ENCODE measurements at regions of chr20 and their contacts with region 1.

Region 1: GRCh38 chr20:50929299-50930138 is 1.7 kb downstream of the ADNP start:
- DNase-seq: peak; percentile 93 to 94
- ATAC-seq: peak; percentile 81
- H3K4me3 ChIP-seq: peak overlapping the region; percentile 74 to 95
- H3K27ac ChIP-seq: peak overlapping the region in 1 of 2 donors; percentile 20
- H3K4me1 ChIP-seq: peaks cover 0 to 3% of the 10 kb centered on the region in 2 donors
- H3K27me3 ChIP-seq: no peaks in the 10 kb centered on the region

Region 2: DNA sequence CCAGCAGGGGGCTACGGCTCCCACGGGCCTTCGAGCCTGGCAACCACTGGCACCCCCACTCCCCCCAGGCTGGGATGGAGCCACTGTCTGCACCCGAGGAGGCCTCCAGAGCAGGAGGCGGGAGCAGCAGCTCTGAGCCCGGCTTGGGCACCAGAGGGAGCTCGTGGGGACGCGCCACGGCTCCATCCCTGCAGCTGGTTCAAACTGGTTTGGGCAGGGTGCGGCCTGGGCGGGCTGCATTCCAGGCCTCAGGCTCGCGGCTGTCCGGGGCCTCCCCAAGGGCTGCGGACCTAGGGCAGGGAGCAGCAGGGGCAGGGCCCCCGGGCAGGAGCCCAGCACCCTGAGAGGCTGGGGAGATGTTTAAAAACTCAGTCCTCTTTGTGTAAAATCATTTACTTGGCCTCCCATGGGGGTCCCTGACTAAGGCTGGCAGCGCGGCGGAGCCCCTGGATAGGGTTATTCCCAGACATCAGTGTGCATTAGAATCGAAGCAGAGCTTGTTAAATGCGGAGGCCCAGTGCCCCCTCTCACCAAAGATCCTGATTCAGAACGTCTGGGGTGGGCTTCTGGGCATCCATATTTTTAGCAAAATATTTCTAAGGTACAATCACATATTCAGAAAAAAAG is 138.8 kb before region 1 on chr20:
- intact Hi-C with region 1: loop called (anchors 1 to 5 kb)
- DNase-seq: peak; percentile 95
- ATAC-seq: peak; percentile 92
- H3K4me3 ChIP-seq: no peak overlapping the region
- H3K27ac ChIP-seq: peak overlapping the region; percentile 34 to 62
- H3K4me1 ChIP-seq: no peaks in the 10 kb centered on the region
- H3K27me3 ChIP-seq: no peaks in the 10 kb centered on the region

Region 3: GRCh38 chr20:50819349-50819748 is 110.2 kb before region 1 on chr20:
- intact Hi-C with region 1: loop called (anchors 1 to 2 kb)
- DNase-seq: no peak
- ATAC-seq: no peak
- H3K4me3 ChIP-seq: no peak overlapping the region
- H3K27ac ChIP-seq: no peak overlapping the region
- H3K4me1 ChIP-seq: no peaks in the 10 kb centered on the region
- H3K27me3 ChIP-seq: no peaks in the 10 kb centered on the region

Region 4: GRCh38 chr20:50958615-50959542 is 29.4 kb after region 1 on chr20 and contains the start of gene MOCS3:
- intact Hi-C with region 1: loop called in 1 of 2 experiments (anchors 1 kb)
- DNase-seq: peak; percentile 88 to 90
- ATAC-seq: peak; percentile 92
- H3K4me3 ChIP-seq: peak within 1 kb of the TSS; percentile 86 to 88
- H3K27ac ChIP-seq: peak within 1 kb of the TSS; percentile 43 to 87
- H3K4me1 ChIP-seq: no peaks in the 10 kb centered on the region
- H3K27me3 ChIP-seq: no peaks in the 10 kb centered on the region
- total RNA-seq, gene MOCS3: 2.7 to 3.2 TPM

Region 5: DNA sequence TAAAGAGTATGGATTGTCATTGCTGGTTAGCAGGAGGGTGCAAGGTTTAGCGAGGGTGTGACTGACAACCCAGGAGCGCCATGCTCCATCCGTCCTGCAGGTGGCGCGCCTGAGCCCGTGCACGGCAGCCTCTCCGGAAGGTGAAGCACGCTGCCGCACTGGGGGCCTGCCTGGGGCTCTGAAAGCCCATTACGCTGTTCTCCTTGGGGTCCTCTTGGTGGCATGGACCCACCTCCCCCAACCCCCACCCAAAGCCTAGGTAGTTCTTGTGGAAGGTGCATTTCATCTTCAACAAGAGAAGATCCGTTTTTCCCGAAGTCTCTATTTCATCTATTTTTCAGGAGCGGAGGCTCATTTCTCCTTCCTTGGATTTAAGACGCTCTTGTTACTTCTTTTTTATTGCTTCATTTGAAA is 290.8 kb after region 1 on chr20:
- intact Hi-C with region 1: no loop called
- DNase-seq: peak in 1 of 2 donors; percentile 78
- ATAC-seq: no peak
- H3K4me3 ChIP-seq: no peak overlapping the region
- H3K27ac ChIP-seq: no peak overlapping the region
- H3K4me1 ChIP-seq: no peaks in the 10 kb centered on the region
- H3K27me3 ChIP-seq: no peaks in the 10 kb centered on the region

Measured in aorta (tissue), 5 donors.